ENCODE measurements at regions of chr15 and their contacts with region 1.

Region 1: GRCh38 chr15:66251790-66252684 is 1.5 kb downstream of the MEGF11 start:
- DNase-seq: peak; percentile 25
- H3K4me3 ChIP-seq: peak overlapping the region; percentile 38 to 52 (median 49)
- H3K27ac ChIP-seq: no peak overlapping the region
- H3K4me1 ChIP-seq: peaks cover 12% of the 10 kb centered on the region
- H3K27me3 ChIP-seq: peaks cover 18% of the 10 kb centered on the region
- CTCF ChIP-seq: peak; percentile 35 to 73

Region 2: GRCh38 chr15:66188464-66188863 is 63.6 kb before region 1 on chr15:
- CTCF ChIA-PET with region 1: no interaction called
- dilution Hi-C with region 1: loop called (anchors 5 kb)
- in situ Hi-C with region 1: no loop called
- intact Hi-C with region 1: no loop called
- DNase-seq: no peak
- H3K4me3 ChIP-seq: no peak overlapping the region
- H3K27ac ChIP-seq: no peak overlapping the region
- H3K4me1 ChIP-seq: peaks cover 16% of the 10 kb centered on the region
- H3K27me3 ChIP-seq: no peaks in the 10 kb centered on the region
- CTCF ChIP-seq: no peak

Region 3: DNA sequence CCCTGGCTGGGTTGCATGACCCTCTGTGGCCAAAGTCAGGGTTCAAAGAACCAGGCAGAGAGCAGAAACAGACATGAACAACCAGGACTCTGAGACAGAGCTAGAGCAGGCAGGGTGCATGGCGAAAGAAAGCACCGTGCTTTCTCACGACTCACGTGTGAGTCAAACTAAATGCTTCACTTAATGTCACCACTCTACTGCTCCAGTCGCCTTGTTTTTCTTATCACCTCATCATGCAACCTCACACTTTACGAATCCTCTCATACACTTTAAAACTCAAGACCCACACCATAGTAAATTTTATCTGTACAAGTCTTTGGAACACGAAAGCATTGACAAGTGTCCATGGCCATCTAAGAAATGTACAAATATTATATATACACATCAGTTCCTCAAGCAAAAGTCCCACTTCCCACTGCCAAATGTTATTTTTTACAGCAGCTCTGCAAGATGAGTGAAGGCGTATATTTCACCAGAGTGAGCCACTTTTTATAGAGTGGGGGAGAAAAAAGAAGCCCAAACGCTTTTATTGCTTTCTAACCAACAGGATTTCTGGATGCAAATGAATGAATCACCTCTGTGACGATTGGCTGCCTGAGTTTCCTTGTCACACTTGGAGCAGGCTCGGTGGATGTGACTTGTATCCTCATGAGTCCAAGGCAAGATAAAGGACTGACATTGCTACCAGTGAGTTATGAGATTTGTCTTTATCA is 17.4 kb after region 1 on chr15:
- CTCF ChIA-PET with region 1: no interaction called
- dilution Hi-C with region 1: no loop called
- in situ Hi-C with region 1: no loop called
- intact Hi-C with region 1: loop called (anchors 1 kb)
- DNase-seq: peak; percentile 66
- H3K4me3 ChIP-seq: no peak overlapping the region
- H3K27ac ChIP-seq: no peak overlapping the region
- H3K4me1 ChIP-seq: no peaks in the 10 kb centered on the region
- H3K27me3 ChIP-seq: no peaks in the 10 kb centered on the region
- CTCF ChIP-seq: no peak

Region 4: DNA sequence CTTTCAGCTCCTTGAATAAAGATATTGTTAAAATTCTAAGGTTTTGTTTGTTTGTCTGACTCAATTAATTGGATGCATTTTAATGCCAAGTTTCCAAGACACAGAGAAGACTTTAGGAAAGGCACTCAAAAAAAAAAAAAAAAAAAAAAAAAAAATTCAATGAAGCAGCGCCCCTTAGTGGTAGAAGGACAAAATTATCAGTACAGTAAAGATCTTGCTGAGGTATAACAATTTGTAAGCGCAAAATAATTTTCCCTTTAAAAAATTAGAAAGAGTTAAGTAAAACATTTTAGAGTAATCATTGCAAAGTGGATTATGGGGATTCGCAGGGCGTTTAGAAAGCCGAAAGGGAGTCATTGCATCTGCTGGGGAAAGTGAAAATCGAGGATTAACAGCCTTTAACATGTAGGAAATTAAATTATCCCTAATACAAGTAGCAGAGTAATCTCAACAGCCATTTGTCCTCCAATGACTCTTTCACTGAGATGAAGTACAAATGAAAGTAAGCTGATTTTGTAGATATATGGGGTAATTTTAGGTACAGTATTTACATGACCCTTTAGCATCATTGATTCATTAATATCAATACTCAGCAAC is 35.5 kb after region 1 on chr15:
- CTCF ChIA-PET with region 1: no interaction called
- dilution Hi-C with region 1: no loop called
- in situ Hi-C with region 1: no loop called
- intact Hi-C with region 1: loop called (anchors 2 kb)
- DNase-seq: peak; percentile 14
- H3K4me3 ChIP-seq: no peak overlapping the region
- H3K27ac ChIP-seq: no peak overlapping the region
- H3K4me1 ChIP-seq: peaks cover 7% of the 10 kb centered on the region
- H3K27me3 ChIP-seq: no peaks in the 10 kb centered on the region
- CTCF ChIP-seq: peak; percentile 56 to 61